Endothelial cell of umbilical vein (primary cell): ENCODE measurements at regions of chr6 and their contacts with region 1.

Region 1: DNA sequence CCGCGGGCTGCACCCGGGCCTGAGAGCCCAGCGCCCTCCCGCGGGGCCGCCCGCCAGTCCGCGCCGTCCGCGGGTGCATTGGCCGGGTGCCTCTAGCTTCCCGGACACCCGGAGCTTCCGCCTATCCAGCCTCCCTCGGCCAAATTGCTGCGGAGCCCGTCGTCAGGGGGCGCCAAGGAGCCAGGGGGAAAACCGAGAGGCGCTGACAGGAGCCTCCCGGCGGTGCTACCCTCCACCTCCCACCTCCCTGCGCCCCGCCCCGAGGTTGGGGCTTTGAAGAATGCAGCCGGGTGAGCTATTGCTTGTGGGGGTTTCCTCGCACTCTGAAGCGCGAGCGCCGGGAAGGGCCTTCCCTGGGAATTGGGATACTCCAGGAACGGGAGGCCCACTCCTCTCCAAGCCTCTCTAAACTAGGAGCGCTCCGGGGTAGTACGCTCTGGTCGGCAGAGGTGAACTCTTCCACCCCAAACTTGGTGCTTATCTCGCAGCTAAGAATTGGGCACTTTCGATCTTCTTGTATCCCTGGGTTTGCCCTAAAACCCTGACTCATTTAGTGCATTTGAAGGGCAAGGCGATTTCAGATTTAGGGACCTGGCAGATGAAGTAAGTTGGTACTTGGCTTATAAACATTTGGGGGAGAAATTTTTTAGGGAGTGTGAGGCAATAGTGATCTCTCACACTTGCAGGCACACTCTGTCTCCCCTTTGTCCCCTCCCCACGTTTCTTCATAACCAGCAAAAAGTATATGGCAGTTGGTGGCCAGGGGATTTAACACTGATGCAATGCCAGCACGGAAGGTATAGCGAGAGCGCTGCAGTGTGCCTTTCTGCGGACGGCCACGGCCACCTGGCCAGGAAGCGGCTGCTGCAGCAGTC is 501 bp downstream of the BEND6 start:
- DNase-seq: peak; percentile 83
- H3K4me3 ChIP-seq: peak overlapping the region; percentile 43 to 83 (median 75)
- H3K27ac ChIP-seq: peak overlapping the region; percentile 52
- H3K4me1 ChIP-seq: peaks cover 17% of the 10 kb centered on the region
- H3K27me3 ChIP-seq: no peaks in the 10 kb centered on the region
- CTCF ChIP-seq: peak; percentile 82 to 88
- POLR2A ChIP-seq: no peak

Region 2: DNA sequence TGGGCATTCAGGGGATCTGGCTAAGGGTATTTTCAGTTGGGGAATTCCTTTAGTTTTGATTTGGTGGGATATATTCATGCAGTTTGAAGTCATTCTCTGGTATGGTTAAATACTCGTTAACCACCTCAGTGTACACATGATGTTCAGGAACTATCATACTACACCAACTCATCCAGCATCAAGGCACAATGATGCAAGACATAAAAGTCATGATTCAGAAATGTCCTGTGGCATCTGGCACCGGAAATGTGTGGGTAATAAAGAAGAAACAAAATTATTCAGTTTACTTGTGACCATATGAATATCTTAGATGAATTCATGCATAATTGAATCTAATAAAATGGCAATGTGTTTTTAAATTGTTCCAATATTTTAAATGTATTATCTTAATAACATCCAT is 951.0 kb before region 1 on chr6:
- CTCF ChIA-PET with region 1: no interaction called
- POLR2A ChIA-PET with region 1: no interaction called
- dilution Hi-C with region 1: no loop called
- intact Hi-C with region 1: no loop called
- DNase-seq: no peak
- H3K4me3 ChIP-seq: no peak overlapping the region
- H3K27ac ChIP-seq: no peak overlapping the region
- H3K4me1 ChIP-seq: no peaks in the 10 kb centered on the region
- H3K27me3 ChIP-seq: no peaks in the 10 kb centered on the region
- CTCF ChIP-seq: no peak
- POLR2A ChIP-seq: no peak

Region 3: GRCh38 chr6:56708810-56709597 is 246.4 kb before region 1 on chr6:
- CTCF ChIA-PET with region 1: no interaction called
- POLR2A ChIA-PET with region 1: no interaction called
- dilution Hi-C with region 1: no loop called
- intact Hi-C with region 1: loop called (anchors 2 kb)
- DNase-seq: peak; percentile 73
- H3K4me3 ChIP-seq: peak overlapping the region in 1 of 3 experiments; percentile 15
- H3K27ac ChIP-seq: peak overlapping the region; percentile 69
- H3K4me1 ChIP-seq: peaks cover 30% of the 10 kb centered on the region
- H3K27me3 ChIP-seq: no peaks in the 10 kb centered on the region
- CTCF ChIP-seq: peak; percentile 30 to 40
- POLR2A ChIP-seq: no peak

Region 4: GRCh38 chr6:56977192-56977591 is 21.8 kb after region 1 on chr6:
- CTCF ChIA-PET with region 1: no interaction called
- POLR2A ChIA-PET with region 1: no interaction called
- dilution Hi-C with region 1: no loop called
- intact Hi-C with region 1: no loop called
- DNase-seq: no peak
- H3K4me3 ChIP-seq: no peak overlapping the region
- H3K27ac ChIP-seq: no peak overlapping the region
- H3K4me1 ChIP-seq: no peaks in the 10 kb centered on the region
- H3K27me3 ChIP-seq: no peaks in the 10 kb centered on the region
- CTCF ChIP-seq: no peak
- POLR2A ChIP-seq: no peak

Region 5: DNA sequence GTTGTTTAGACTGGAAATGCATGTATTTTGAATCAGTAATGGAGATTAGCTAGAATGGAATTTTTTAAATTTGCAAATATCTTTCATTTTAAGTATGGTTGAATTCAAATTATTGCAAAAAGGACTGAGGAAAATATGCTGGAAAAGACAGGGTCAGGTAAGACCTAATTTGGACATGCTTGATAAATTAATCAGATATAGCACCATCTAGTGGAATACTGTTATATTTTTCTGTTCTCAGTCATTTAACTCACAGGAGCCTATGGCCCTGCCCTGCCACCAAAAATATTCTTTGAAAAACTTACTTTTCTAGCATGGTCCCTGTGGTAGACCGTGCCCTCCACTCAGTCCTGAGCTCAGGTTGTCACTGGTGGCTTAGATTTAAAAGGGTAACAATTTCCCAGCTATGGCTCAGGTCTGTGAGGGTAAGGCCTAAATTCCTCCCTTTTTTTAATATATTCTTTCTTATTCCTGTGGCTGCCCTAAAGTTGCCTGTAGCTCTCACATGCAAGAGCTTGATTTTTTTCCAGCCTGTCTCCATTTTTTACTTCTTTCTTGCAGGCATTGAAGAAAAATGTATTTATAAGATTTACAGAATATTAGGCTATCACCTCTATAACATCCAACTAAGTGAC is 65.8 kb after region 1 on chr6:
- CTCF ChIA-PET with region 1: interaction called, 11 read pairs
- POLR2A ChIA-PET with region 1: no interaction called
- dilution Hi-C with region 1: no loop called
- intact Hi-C with region 1: loop called (anchors 1 kb)
- DNase-seq: peak; percentile 54
- H3K4me3 ChIP-seq: no peak overlapping the region
- H3K27ac ChIP-seq: no peak overlapping the region
- H3K4me1 ChIP-seq: peaks cover 4% of the 10 kb centered on the region
- H3K27me3 ChIP-seq: no peaks in the 10 kb centered on the region
- CTCF ChIP-seq: peak; percentile 21 to 39
- POLR2A ChIP-seq: no peak

Region 6: GRCh38 chr6:57048577-57048976 is 93.2 kb after region 1 on chr6:
- CTCF ChIA-PET with region 1: interaction called, 6 read pairs
- POLR2A ChIA-PET with region 1: no interaction called
- dilution Hi-C with region 1: no loop called
- intact Hi-C with region 1: loop called (anchors 1 kb)
- DNase-seq: no peak
- H3K4me3 ChIP-seq: no peak overlapping the region
- H3K27ac ChIP-seq: no peak overlapping the region
- H3K4me1 ChIP-seq: peaks cover 10% of the 10 kb centered on the region
- H3K27me3 ChIP-seq: peaks cover 1 to 4% of the 10 kb centered on the region in 2 experiments
- CTCF ChIP-seq: no peak
- POLR2A ChIP-seq: no peak

Region 7: DNA sequence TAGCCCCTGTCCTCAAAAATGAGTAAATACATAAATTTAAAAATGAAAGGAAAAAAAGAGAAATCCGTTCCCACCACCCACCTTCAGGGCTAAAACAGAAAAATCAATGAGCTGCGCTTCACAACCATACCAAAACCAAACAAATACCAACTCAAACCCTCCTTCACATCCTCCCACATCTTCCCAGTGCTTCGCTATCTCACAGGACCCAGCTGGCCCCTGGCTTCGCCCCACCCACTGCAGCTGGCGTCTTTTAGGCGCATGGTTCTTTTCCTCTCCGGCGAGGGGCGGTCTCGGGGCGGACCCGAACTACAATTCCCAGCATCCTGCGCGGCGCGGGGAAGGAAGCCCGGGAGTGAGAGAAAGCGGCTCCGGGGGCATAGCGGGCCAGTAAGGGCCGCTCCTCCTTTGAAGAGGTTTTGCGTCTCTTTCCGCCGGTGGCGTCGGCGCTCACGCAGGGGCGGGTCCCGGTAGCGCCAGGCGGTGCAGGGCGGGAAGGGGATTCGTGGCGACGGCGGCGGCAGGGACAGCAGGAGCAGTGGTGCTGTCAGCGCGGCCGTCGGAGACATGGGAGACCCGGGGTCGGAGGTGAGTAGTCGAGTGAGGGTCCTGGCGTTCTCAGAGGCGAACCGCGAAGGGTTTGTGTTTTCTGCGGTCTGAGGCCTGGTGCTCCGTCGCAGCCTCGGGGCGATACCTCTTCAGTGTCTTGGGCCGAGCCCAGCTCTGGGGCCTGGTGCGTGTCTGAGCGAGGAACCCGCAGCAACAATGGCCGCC is 134.5 kb after region 1 on chr6 and contains the start of gene ZNF451:
- CTCF ChIA-PET with region 1: interaction called, 3 read pairs
- POLR2A ChIA-PET with region 1: no interaction called
- dilution Hi-C with region 1: no loop called
- intact Hi-C with region 1: loop called (anchors 2 kb)
- DNase-seq: peak; percentile 99
- H3K4me3 ChIP-seq: peak within 1 kb of the TSS; percentile 57 to 70 (median 63)
- H3K27ac ChIP-seq: peak within 1 kb of the TSS; percentile 69
- H3K4me1 ChIP-seq: peaks cover 30% of the 10 kb centered on the region
- H3K27me3 ChIP-seq: no peaks in the 10 kb centered on the region
- CTCF ChIP-seq: no peak
- POLR2A ChIP-seq: peak; percentile 49
- total RNA-seq, gene ZNF451: 54.2 and 64.4 TPM in 2 replicates

Region 8: GRCh38 chr6:57221936-57222742 is 266.7 kb after region 1 on chr6 and contains the start of gene RAB23:
- CTCF ChIA-PET with region 1: no interaction called
- POLR2A ChIA-PET with region 1: no interaction called
- dilution Hi-C with region 1: no loop called
- intact Hi-C with region 1: loop called (anchors 1 kb)
- DNase-seq: peak; percentile 91
- H3K4me3 ChIP-seq: peak within 1 kb of the TSS; percentile 75 to 96 (median 90)
- H3K27ac ChIP-seq: peak within 1 kb of the TSS; percentile 33
- H3K4me1 ChIP-seq: peaks cover 11% of the 10 kb centered on the region
- H3K27me3 ChIP-seq: no peaks in the 10 kb centered on the region
- CTCF ChIP-seq: no peak
- POLR2A ChIP-seq: peak; percentile 84
- total RNA-seq, gene RAB23: 8.8 and 9.4 TPM in 2 replicates